Aorta (tissue), 5 donors: ENCODE measurements at regions of chr2 and their contacts with region 1.

Region 1: DNA sequence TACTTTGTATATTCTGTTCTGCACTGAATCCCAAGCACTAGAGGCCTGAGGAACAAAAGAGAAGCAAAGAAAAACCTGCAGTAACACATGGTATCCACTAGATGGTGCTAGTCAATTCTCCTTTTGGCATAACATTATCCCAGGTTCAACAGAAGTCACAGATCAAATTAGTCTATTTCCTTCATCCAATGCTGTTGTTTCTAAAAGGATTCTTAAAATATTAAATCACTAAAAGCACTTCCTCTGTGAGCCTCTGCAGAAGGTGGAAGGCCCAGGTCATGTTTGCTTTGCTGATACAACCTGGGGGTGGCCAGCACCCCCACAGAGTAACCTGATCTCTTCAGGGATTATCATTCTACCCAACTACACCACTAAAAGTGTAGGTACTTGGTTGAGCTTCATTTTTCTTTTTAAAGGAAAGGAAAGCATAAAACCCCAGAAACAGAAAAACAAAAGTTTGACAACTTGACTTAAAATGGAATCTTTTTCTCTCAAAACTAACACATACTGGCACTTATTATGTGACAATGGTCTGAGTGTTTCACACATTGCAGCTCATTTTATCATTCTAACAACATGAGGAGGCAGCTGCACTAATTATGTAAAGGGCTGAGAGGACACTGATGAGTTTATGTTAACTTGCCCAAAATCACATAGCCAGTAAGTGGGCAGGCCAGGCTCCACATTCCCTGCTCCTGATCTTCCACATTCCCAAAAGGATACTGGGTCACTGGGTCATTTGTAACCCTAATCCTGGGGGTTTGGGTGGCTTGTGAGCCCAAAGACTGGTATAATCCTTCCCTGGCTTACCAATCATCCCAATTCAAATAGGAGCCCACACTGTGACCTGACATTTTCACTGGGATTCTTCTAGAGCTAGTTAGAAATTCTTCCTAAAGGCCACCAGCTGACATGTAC is 66.8 kb upstream of the DNER start:
- DNase-seq: no peak
- ATAC-seq: peak; percentile 86
- H3K4me3 ChIP-seq: no peak overlapping the region
- H3K27ac ChIP-seq: no peak overlapping the region
- H3K4me1 ChIP-seq: no peaks in the 10 kb centered on the region
- H3K27me3 ChIP-seq: no peaks in the 10 kb centered on the region

Region 2: GRCh38 chr2:228768818-228769217 is 1012.3 kb before region 1 on chr2:
- intact Hi-C with region 1: no loop called
- DNase-seq: no peak
- ATAC-seq: peak; percentile 68
- H3K4me3 ChIP-seq: no peak overlapping the region
- H3K27ac ChIP-seq: no peak overlapping the region
- H3K4me1 ChIP-seq: peaks cover 0 to 10% of the 10 kb centered on the region in 2 donors
- H3K27me3 ChIP-seq: no peaks in the 10 kb centered on the region

Region 3: GRCh38 chr2:229733611-229734245 is 47.4 kb before region 1 on chr2:
- intact Hi-C with region 1: no loop called
- DNase-seq: no peak
- ATAC-seq: no peak
- H3K4me3 ChIP-seq: no peak overlapping the region
- H3K27ac ChIP-seq: no peak overlapping the region
- H3K4me1 ChIP-seq: no peaks in the 10 kb centered on the region
- H3K27me3 ChIP-seq: no peaks in the 10 kb centered on the region

Region 4: GRCh38 chr2:229921892-229922445 is 140.9 kb after region 1 on chr2 and contains the start of gene TRIP12:
- intact Hi-C with region 1: loop called in 1 of 2 experiments (anchors 5 kb)
- DNase-seq: peak; percentile 95 to 96
- ATAC-seq: peak; percentile 95
- H3K4me3 ChIP-seq: peak within 1 kb of the TSS; percentile 62 to 87
- H3K27ac ChIP-seq: peak within 1 kb of the TSS; percentile 92 to 97
- H3K4me1 ChIP-seq: peaks cover 0 to 2% of the 10 kb centered on the region in 2 donors
- H3K27me3 ChIP-seq: no peaks in the 10 kb centered on the region
- total RNA-seq, gene TRIP12: 220 to 232 TPM

Region 5: GRCh38 chr2:230007931-230008707 is 227.0 kb after region 1 on chr2:
- intact Hi-C with region 1: no loop called
- DNase-seq: peak; percentile 81 to 89
- ATAC-seq: peak; percentile 67
- H3K4me3 ChIP-seq: no peak overlapping the region
- H3K27ac ChIP-seq: no peak overlapping the region
- H3K4me1 ChIP-seq: no peaks in the 10 kb centered on the region
- H3K27me3 ChIP-seq: no peaks in the 10 kb centered on the region

Region 6: GRCh38 chr2:230160112-230160660 is 379.1 kb after region 1 on chr2:
- intact Hi-C with region 1: loop called in 1 of 2 experiments (anchors 5 kb)
- DNase-seq: peak in 1 of 2 donors; percentile 59
- ATAC-seq: peak; percentile 73
- H3K4me3 ChIP-seq: no peak overlapping the region
- H3K27ac ChIP-seq: no peak overlapping the region
- H3K4me1 ChIP-seq: no peaks in the 10 kb centered on the region
- H3K27me3 ChIP-seq: no peaks in the 10 kb centered on the region